T-cell (primary cell): ENCODE measurements at regions of chr9 and their contacts with region 1.

Region 1: DNA sequence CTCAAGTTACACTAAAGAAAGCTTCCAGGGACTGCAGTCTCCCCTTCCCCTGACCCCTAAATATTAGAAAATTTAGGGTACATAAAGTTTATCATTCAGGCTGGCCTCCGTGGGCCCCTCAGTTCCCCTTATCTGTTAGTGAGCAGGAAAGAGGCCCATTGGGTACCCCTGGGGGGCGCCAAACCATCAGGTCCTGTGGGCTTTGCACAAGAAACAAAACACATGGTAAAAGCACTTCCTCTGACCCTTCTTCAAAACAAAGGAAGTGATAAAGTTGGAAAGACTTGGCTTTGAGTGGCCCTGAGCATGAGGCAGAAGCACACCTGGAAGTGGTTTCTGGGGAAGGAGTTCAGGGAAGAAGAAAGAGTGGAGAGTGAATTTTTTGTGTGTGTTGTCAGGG is 213.0 kb downstream of the SMARCA2 start:
- DNase-seq: no peak
- ATAC-seq: no peak
- H3K4me3 ChIP-seq: no peak overlapping the region
- H3K4me3 Mint-ChIP-seq: no peak overlapping the region
- H3K27ac ChIP-seq: no peak overlapping the region
- H3K27ac Mint-ChIP-seq: no peak overlapping the region
- H3K4me1 ChIP-seq: no peaks in the 10 kb centered on the region
- H3K4me1 Mint-ChIP-seq: no peaks in the 10 kb centered on the region
- H3K27me3 ChIP-seq: no peaks in the 10 kb centered on the region
- H3K27me3 Mint-ChIP-seq: peaks cover 0 to 2% of the 10 kb centered on the region in 2 donors

Region 2: DNA sequence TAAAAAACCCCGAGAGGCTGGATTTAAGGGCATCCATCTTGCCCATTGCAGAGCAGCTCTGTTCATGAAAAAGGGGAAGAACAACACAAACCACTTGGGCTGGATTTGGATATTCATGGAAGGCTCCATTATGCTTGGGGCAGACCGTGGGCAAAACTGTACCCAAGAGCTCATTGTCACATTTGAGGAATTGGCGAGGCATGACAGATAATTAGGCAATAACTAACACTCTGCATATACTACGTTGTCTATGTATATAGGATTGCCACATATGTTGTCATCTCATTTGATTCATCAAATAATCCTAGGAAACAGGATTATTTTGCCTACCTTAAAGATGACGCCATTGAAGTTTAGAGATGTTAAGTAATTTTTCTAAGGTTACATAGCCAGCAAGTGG is 42.4 kb after region 1 on chr9:
- CTCF ChIA-PET with region 1: interaction called in 1 of 2 experiments, 12 read pairs
- POLR2A ChIA-PET with region 1: no interaction called
- DNase-seq: no peak
- ATAC-seq: no peak
- H3K4me3 ChIP-seq: no peak overlapping the region
- H3K4me3 Mint-ChIP-seq: no peak overlapping the region
- H3K27ac ChIP-seq: no peak overlapping the region
- H3K27ac Mint-ChIP-seq: no peak overlapping the region
- H3K4me1 ChIP-seq: no peaks in the 10 kb centered on the region
- H3K4me1 Mint-ChIP-seq: peaks cover 0 to 3% (median 0%) of the 10 kb centered on the region in 3 donors
- H3K27me3 ChIP-seq: no peaks in the 10 kb centered on the region
- H3K27me3 Mint-ChIP-seq: peaks cover 5 to 8% of the 10 kb centered on the region in 2 donors